CD4-positive, alpha-beta T cell (primary cell): ENCODE measurements at regions of chr2 and their contacts with region 1.

Region 1: GRCh38 chr2:196205881-196206435 is 34.6 kb upstream of the STK17B start:
- DNase-seq: no peak
- ATAC-seq: no peak
- H3K4me3 ChIP-seq: no peak overlapping the region
- H3K4me3 Mint-ChIP-seq: no peak overlapping the region
- H3K27ac ChIP-seq: no peak overlapping the region
- H3K27ac Mint-ChIP-seq: peak overlapping the region; percentile 43
- H3K4me1 ChIP-seq: peaks cover 34% of the 10 kb centered on the region
- H3K4me1 Mint-ChIP-seq: peaks cover 45% of the 10 kb centered on the region
- H3K27me3 ChIP-seq: no peaks in the 10 kb centered on the region
- H3K27me3 Mint-ChIP-seq: no peaks in the 10 kb centered on the region
- CTCF ChIP-seq: no peak

Region 2: GRCh38 chr2:196195302-196195701 is 10.7 kb before region 1 on chr2:
- CTCF ChIA-PET with region 1: interaction called, 7 read pairs
- POLR2A ChIA-PET with region 1: interaction called, 23 read pairs
- intact Hi-C with region 1: loop called (anchors 1 to 2 kb)
- DNase-seq: peak in 3 of 14 experiments; percentile 36 to 72 (median 37)
- ATAC-seq: no peak
- H3K4me3 ChIP-seq: no peak overlapping the region
- H3K4me3 Mint-ChIP-seq: peak overlapping the region; percentile 38
- H3K27ac ChIP-seq: no peak overlapping the region
- H3K27ac Mint-ChIP-seq: peak overlapping the region; percentile 41
- H3K4me1 ChIP-seq: peaks cover 12% of the 10 kb centered on the region
- H3K4me1 Mint-ChIP-seq: peaks cover 81% of the 10 kb centered on the region
- H3K27me3 ChIP-seq: no peaks in the 10 kb centered on the region
- H3K27me3 Mint-ChIP-seq: no peaks in the 10 kb centered on the region
- CTCF ChIP-seq: no peak

Region 3: GRCh38 chr2:196263181-196263747 is 57.3 kb after region 1 on chr2:
- CTCF ChIA-PET with region 1: interaction called, 3 read pairs
- POLR2A ChIA-PET with region 1: interaction called, 26 read pairs
- intact Hi-C with region 1: loop called in 1 of 2 experiments (anchors 2 kb)
- DNase-seq: peak in 11 of 14 experiments; percentile 14 to 87 (median 42)
- ATAC-seq: peak; percentile 79
- H3K4me3 ChIP-seq: peak overlapping the region; percentile 28
- H3K4me3 Mint-ChIP-seq: peak overlapping the region; percentile 43
- H3K27ac ChIP-seq: peak overlapping the region; percentile 79 to 85
- H3K27ac Mint-ChIP-seq: peak overlapping the region; percentile 84
- H3K4me1 ChIP-seq: peaks cover 48% of the 10 kb centered on the region
- H3K4me1 Mint-ChIP-seq: peaks cover 88% of the 10 kb centered on the region
- H3K27me3 ChIP-seq: no peaks in the 10 kb centered on the region
- H3K27me3 Mint-ChIP-seq: no peaks in the 10 kb centered on the region
- CTCF ChIP-seq: no peak

Region 4: DNA sequence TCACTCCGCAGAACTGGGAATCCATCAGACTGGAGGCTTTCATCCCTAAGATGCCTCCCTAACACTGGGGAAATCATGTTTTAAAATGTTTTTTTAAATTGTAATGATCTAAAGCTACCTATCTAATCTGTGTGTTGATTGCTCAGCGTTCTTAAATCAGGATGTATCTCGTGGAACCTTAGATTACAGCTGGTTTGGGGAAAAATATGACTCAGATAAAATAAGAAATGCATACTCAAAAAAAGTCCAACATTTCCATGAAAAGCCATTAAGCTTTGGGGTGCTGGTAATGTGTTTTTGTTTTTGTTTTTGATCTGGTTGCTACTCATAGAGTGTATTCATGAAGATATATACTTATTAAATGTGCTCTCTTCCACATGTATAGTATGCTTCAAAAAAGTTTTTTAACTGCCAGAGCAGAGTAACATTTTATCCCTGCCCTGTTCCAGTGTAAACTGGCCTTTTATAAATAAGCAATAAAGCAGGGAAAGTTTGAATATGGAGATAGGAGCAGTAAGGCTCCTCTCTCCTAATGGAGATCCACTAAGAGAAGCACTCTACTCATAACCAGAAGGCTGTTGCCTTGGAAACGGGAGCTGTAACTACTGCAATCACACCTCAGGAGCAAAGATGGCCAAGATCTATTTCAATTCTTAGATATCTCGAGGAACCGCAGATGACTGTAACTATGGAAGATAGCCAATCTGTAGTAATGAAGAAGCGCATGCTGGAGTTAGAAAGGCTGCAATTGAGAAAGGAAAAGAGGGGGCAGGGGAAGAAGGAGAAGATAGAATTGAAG is 1063.0 kb after region 1 on chr2:
- CTCF ChIA-PET with region 1: no interaction called
- POLR2A ChIA-PET with region 1: no interaction called
- intact Hi-C with region 1: no loop called
- DNase-seq: peak in 4 of 14 experiments; percentile 36 to 74 (median 64)
- ATAC-seq: peak; percentile 66
- H3K4me3 ChIP-seq: no peak overlapping the region
- H3K4me3 Mint-ChIP-seq: peak overlapping the region; percentile 35
- H3K27ac ChIP-seq: peak overlapping the region; percentile 52 to 63
- H3K27ac Mint-ChIP-seq: peak overlapping the region; percentile 78
- H3K4me1 ChIP-seq: peaks cover 80% of the 10 kb centered on the region
- H3K4me1 Mint-ChIP-seq: peaks cover 89% of the 10 kb centered on the region
- H3K27me3 ChIP-seq: no peaks in the 10 kb centered on the region
- H3K27me3 Mint-ChIP-seq: no peaks in the 10 kb centered on the region
- CTCF ChIP-seq: no peak